Posterior cingulate gyrus (tissue), 11 donors: ENCODE measurements at regions of chr11 and their contacts with region 1.

Region 1: DNA sequence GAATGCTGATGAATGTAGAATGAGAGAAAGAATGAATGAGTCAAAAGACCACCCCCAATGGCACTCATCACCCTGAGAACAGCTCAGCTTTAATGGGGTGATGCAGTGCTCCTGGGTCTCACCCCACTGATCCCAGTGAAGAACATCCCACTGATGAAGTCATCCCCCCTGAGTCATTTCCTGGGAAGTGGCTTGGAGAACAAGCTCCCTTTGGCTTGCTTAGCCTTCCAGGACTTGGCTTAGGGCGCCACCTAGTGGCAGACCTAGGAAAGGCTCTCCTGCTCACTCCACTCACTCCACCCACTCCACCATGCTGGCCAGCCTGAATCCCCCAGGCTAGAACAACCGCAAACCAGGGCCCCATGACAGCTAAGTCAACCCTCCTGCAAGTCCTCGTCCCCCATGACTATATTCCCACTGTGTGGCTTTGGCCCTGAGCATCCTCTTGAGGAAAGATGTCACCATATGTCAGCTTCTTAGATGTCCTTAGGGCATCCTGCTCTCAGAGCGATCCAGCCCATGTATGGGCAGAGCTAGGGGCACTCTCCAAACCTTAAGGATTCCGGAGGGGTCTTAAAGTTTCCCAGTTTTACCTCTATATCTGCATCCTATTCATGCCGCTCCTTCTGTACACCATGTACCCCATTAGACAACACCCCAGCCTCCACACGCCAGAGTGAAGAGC is 17.8 kb upstream of the TMPRSS13 start:
- DNase-seq: peak; percentile 80 to 98 (median 93)

Region 2: DNA sequence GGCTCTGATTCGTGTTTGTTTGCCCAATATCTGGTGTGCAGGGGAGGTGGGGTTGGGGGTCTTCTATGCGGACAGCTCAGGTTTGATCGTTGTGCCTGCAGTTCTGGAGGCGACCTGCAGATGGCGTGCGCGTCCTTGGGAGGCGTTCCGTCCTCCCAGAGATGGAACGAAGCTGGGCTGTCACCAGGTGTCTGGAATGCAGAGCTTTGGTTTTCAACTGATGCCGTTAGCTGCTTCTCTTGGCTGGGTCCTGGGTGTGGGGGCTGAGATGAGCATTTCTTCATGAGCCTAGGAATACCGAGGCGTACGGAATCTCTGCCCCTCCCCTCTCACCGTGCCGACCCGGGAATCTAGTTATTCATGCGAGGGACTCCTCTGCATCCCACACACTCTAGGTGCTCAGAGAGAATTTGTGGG is 520.7 kb before region 1 on chr11:
- intact Hi-C with region 1: loop called (anchors 10 kb)
- DNase-seq: peak; percentile 70 to 97 (median 86)

Region 3: DNA sequence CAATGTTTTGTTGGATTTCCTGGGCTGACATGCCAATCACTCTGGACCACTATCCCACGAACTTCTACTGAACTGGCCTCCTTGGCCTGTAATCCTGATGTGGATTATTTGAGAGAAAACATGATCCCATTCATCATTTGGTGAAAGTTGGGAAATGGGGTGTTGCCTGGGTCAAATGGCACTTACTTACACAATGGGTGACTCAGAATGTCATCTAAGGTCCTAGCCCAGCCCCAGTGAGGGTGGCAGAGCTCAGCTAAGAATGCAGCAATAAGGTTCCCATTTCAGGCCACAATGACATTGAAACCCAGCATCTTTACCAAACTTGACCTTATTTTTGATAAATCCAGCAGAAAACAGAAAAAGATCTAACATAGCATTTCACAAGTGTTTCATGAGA is 141.9 kb before region 1 on chr11:
- intact Hi-C with region 1: no loop called
- DNase-seq: no peak

Region 4: DNA sequence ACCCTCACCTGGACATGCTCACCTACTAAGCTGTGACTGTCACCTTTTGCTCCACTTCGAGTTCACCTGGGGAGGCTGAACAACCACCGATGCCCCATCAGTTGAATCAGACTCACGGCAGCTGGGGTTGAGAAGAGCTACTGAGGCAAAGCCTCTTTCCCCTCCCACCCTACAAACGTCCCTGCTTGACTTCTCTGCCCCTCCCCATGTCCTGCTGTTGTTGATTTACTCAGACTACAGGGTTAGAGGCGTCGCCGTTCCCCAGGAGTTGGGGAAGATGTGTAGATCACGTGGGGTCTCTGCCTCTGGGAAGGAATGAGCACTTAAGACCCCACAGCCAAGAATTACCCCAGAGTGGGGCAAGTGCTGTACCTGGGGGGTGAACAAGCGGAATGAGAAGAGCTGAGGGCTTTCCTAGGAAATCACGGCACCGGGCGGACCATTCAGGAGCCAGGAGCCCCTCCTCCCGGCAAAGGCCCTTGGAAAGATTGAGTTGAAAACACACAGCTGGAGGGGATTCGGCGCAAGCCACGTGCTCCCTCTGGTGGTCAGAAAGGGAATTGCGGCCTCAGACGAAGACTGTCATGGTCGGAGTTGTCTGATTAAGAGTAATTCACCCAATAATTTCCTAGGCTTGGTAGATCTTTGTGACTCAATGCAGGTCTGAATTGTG is 129.5 kb before region 1 on chr11:
- intact Hi-C with region 1: loop called (anchors 1 kb)
- DNase-seq: peak; percentile 81 to 98 (median 92)

Region 5: DNA sequence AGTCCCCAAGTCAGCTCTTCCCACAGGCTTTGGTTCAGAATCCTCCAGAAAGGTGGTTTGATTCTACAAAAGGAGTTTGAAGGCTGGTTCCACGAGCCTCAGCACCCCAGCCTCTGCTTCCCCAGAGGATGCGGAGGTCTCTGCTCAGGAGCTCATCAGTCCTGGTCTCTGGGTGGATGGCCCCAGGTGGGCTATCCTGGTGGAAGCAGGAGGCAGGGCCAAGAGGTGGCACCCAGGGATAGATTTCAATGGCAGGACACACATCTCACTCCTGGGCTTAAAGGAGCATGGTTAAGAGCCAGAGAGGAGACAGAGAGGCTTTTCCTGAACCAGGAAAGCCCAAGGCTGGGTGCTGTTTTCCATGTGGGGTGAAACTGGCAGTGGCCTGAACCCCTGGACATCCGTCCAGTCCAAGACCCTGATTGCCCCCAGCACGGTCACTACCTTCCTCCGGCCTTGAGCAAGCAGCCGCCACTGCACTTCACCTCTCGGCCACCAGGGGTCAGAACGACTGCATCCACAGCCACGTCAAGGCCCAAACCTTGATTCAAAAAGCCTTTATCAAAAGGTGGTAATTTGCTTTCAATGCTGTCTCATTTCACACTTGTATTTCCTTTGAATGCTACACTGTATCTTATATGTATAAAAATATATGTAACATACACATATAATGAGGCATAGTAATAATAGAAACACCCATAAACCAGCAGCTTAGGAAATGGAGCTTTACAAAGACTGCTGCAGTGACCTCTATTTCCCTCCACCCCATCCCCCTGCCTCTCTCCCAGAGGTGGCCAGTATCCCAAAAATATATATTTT is 103.1 kb before region 1 on chr11:
- intact Hi-C with region 1: loop called (anchors 1 kb)
- DNase-seq: peak; percentile 69 to 96 (median 87)

Region 6: GRCh38 chr11:118051611-118052461 is 104.9 kb after region 1 on chr11:
- intact Hi-C with region 1: loop called (anchors 2 kb)
- DNase-seq: no peak